ENCODE measurements at regions of chr15 and their contacts with region 1.

Region 1: GRCh38 chr15:83571820-83572707 is 81.9 kb upstream of the ADAMTSL3 start:
- DNase-seq: no peak
- ATAC-seq: no peak
- H3K4me3 Mint-ChIP-seq: no peak overlapping the region
- H3K27ac Mint-ChIP-seq: no peak overlapping the region
- H3K4me1 Mint-ChIP-seq: no peaks in the 10 kb centered on the region
- H3K27me3 Mint-ChIP-seq: peaks cover 3% of the 10 kb centered on the region

Region 2: DNA sequence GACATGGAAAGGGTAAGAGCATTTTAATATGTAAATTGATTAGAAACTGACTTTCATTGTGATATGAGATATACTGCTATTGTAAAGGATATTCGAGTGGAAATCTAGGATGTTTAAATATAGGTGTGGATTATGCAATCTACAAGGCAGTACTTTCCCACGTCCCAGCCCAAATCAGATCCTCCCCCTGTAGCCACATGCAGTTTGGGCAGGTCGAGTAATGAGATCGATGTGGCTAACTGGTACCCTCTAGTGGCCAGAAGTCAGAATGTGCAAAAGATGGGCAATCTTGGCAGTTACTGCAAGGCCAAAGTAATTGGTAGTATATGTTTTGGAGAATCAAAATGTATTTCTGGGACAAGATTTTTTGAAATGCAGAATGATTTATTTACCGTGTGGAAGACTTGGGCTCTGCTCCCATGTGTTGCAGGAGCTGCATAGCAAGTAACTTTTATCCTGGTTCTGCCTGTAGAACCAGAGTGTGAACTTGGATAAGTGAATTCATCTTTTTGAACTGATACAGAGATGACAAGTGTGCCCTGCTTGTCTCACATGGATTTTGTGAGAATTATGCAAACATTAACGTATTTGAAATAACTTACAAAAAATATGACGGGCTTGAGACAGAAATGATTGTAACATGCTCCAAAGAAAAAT is 12.6 kb before region 1 on chr15:
- CTCF ChIA-PET with region 1: interaction called, 25 read pairs
- POLR2A ChIA-PET with region 1: no interaction called
- intact Hi-C with region 1: no loop called
- DNase-seq: peak; percentile 65
- ATAC-seq: peak; percentile 60
- H3K4me3 Mint-ChIP-seq: no peak overlapping the region
- H3K27ac Mint-ChIP-seq: no peak overlapping the region
- H3K4me1 Mint-ChIP-seq: no peaks in the 10 kb centered on the region
- H3K27me3 Mint-ChIP-seq: peaks cover 12% of the 10 kb centered on the region

Region 3: DNA sequence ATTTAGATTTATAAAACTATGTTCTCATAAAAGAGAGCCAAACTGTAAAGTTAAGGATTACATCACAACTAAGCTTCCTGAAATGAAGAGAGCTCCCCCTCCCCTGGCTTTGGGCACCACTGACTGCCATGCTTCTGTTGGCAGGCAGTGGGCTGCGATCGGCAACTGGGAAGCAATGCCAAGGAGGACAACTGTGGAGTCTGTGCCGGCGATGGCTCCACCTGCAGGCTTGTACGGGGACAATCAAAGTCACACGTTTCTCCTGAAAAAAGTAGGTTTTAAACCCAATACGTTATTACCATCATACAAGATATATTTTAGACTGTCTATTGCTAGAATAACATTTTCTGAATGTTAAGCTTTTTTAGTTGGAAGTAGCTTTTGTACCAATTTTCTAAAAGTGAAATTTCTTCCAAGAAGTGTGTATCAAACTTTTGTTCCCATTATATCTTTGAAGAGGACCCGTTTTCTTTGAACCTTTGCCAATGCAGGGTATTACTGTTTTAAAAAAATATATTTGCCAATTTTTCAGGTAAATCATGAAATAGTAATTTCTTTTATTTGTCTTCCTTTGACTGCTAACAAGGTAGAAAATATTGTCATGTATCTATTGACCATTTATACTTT is 266.0 kb after region 1 on chr15:
- CTCF ChIA-PET with region 1: no interaction called
- POLR2A ChIA-PET with region 1: no interaction called
- intact Hi-C with region 1: loop called in 1 of 2 experiments (anchors 5 kb)
- DNase-seq: peak; percentile 37
- ATAC-seq: no peak
- H3K4me3 Mint-ChIP-seq: no peak overlapping the region
- H3K27ac Mint-ChIP-seq: no peak overlapping the region
- H3K4me1 Mint-ChIP-seq: no peaks in the 10 kb centered on the region
- H3K27me3 Mint-ChIP-seq: peaks cover 16% of the 10 kb centered on the region

Measured in activated CD4-positive, alpha-beta T cell treated with anti-CD3 and anti-CD28 coated beads for 36 hours (primary cell).